Left cardiac atrium (tissue), 4 donors: ENCODE measurements at regions of chr17 and their contacts with region 1.

Region 1: DNA sequence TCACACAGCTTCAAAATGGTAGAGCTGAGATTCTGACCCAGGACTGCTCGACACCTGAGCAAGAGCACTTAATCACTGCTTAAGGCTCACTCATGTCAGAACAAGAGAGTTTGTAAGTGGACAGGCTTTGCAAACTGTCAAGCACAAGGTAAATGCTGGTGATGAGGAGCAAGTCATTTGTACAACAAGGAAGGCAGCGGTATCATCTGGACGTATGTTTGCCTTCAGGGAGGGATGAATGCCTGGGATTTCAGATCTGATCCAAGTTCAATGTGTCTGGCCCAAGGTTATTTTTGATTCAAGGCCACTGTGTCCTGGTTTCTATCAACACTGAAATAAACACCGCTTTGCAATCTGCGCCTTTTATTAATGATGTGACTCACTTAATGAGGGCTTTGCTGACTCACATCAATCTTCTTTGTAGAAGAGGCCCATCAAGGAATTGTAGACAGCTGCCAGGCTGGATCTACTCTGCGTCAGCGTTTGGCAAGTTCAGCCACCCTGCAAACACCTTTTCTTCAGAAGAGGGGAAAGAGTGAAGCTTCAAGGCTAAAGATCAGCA is 174.4 kb upstream of the HS3ST3A1 start:
- DNase-seq: peak; percentile 46
- ATAC-seq: peak; percentile 74 to 93

Region 2: DNA sequence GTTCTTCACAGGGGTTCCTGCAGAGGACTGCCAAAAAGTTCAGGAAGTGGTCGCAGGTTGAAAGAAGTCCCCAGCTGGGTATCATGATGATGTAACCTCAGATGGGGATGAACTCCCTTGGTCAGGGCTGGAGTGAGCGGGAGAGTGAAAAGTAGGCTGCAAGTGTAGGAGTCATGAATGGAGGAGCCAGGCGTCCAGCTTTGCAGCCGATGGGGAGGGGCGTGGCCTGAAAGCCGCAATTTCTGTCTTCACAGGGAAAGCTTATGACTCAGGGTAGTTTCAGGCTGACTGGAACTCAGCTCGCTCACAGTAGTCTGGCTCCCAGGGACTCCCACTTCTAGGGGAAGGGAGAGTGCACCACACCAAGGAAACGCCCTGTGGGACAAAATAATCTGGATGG is 104.3 kb before region 1 on chr17:
- intact Hi-C with region 1: no loop called
- DNase-seq: no peak
- ATAC-seq: no peak

Region 3: DNA sequence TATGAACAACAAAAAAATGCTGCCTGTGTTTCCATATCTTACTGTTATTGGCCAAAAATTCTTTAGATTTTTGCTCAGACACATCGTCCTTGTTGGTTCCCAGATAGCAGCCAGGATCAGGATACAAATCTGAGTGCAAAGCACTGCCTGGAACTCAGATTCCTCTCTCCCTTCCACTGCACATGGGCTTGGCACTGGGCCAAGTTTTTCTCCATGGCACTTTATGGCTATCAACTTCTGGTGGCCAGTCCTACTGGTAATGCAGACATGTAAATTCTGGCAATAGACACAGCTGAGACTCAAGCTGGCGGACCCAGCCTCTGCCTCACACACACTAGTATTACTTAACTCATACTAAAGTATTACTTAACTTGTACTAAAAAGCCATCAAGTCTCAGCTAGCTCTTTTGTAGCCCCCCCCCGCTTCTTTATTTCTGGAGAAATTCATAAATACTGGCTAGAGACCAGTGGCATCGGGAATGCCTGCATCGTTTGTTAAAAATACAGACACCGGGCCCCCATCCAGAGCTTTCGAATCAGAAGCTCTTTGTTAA is 112.0 kb after region 1 on chr17:
- intact Hi-C with region 1: loop called in 1 of 2 experiments (anchors 10 kb)
- DNase-seq: peak; percentile 32
- ATAC-seq: peak in 1 of 2 donors; percentile 16

Region 4: GRCh38 chr17:14014657-14015056 is 238.5 kb after region 1 on chr17:
- intact Hi-C with region 1: no loop called
- DNase-seq: no peak
- ATAC-seq: no peak